Activated CD8-positive, alpha-beta T cell treated with anti-CD3 and anti-CD28 coated beads for 36 hours (primary cell): ENCODE measurements at regions of chrX and their contacts with region 1.

Region 1: GRCh38 chrX:119729408-119730201 is 28.8 kb upstream of the SOWAHD start:
- DNase-seq: peak; percentile 77
- ATAC-seq: peak; percentile 70
- H3K4me3 Mint-ChIP-seq: no peak overlapping the region
- H3K27ac Mint-ChIP-seq: no peak overlapping the region
- H3K4me1 Mint-ChIP-seq: peaks cover 5% of the 10 kb centered on the region
- H3K27me3 Mint-ChIP-seq: no peaks in the 10 kb centered on the region
- CTCF ChIP-seq: peak; percentile 51

Region 2: GRCh38 chrX:119606280-119607015 is 123.2 kb before region 1 on chrX and contains the start of gene NKRF:
- CTCF ChIA-PET with region 1: interaction called, 14 read pairs
- POLR2A ChIA-PET with region 1: no interaction called
- intact Hi-C with region 1: no loop called
- DNase-seq: peak; percentile 93
- ATAC-seq: peak; percentile 80
- H3K4me3 Mint-ChIP-seq: peak within 1 kb of the TSS; percentile 88
- H3K27ac Mint-ChIP-seq: peak within 1 kb of the TSS; percentile 95
- H3K4me1 Mint-ChIP-seq: peaks cover 33% of the 10 kb centered on the region
- H3K27me3 Mint-ChIP-seq: no peaks in the 10 kb centered on the region
- CTCF ChIP-seq: no peak
- total RNA-seq, gene NKRF: 22.3 to 23.5 TPM

Region 3: GRCh38 chrX:119693040-119693995 is 36.3 kb before region 1 on chrX and contains the start of gene SEPTIN6:
- CTCF ChIA-PET with region 1: interaction called, 14 read pairs
- POLR2A ChIA-PET with region 1: interaction called, 9 read pairs
- intact Hi-C with region 1: no loop called
- DNase-seq: peak; percentile 90
- ATAC-seq: peak; percentile 76
- H3K4me3 Mint-ChIP-seq: peak within 1 kb of the TSS; percentile 96
- H3K27ac Mint-ChIP-seq: peak within 1 kb of the TSS; percentile 99
- H3K4me1 Mint-ChIP-seq: peaks cover 8% of the 10 kb centered on the region
- H3K27me3 Mint-ChIP-seq: no peaks in the 10 kb centered on the region
- CTCF ChIP-seq: no peak
- total RNA-seq, gene SEPTIN6: 205 to 209 TPM

Region 4: GRCh38 chrX:119745283-119745848 is 15.8 kb after region 1 on chrX:
- CTCF ChIA-PET with region 1: interaction called, 12 read pairs
- POLR2A ChIA-PET with region 1: no interaction called
- intact Hi-C with region 1: no loop called
- DNase-seq: no peak
- ATAC-seq: no peak
- H3K4me3 Mint-ChIP-seq: no peak overlapping the region
- H3K27ac Mint-ChIP-seq: no peak overlapping the region
- H3K4me1 Mint-ChIP-seq: peaks cover 7% of the 10 kb centered on the region
- H3K27me3 Mint-ChIP-seq: no peaks in the 10 kb centered on the region
- CTCF ChIP-seq: no peak